Heart right ventricle (tissue), 16 donors: ENCODE measurements at regions of chrX and their contacts with region 1.

Region 1: DNA sequence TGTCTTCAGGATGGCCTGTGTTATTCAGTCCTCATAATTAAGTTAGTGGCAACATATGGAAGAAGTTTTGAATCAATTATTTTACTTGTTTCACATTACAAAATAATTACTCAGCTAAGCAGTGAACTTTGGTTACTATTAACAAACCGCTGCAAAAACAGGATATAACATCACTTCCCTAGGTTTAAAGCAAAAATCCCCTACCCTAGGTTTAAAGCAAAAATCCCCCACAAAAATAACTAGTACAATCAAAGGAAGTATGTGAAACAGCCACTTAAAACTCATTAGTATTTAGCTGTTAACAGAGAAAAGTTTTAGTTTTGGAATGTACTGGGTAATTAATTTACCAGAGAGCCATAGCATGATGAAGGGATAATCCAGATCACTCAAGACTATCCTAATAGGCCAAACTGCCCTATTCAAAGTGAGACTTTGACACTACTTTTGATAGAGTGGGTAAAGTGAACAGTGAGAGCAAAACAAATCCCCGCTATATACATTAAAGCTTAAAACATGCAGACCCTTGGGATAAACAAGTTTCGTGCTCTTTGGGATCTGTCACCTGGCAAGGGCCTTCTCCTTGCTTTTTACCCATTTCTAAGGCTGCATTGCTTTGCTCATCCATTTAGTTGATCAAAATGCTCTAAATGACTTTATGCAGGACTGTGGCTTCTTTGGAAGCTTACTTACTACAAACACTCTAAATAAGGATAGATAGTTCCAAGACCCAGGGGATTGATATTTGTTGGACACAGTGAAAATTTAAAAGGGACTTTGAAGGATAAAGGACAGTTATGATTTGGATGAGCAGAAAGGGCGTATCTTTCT is 36.4 kb upstream of the GPR174 start:
- DNase-seq: no peak
- ATAC-seq: peak in 3 of 8 donors; percentile 34 to 67 (median 39)
- H3K4me3 ChIP-seq: no peak overlapping the region
- H3K27ac ChIP-seq: peak overlapping the region in 6 of 10 donors; percentile 13 to 84 (median 53)
- H3K4me1 ChIP-seq: peaks cover 0 to 15% (median 0%) of the 10 kb centered on the region in 9 donors
- H3K27me3 ChIP-seq: no peaks in the 10 kb centered on the region
- CTCF ChIP-seq: no peak

Region 2: GRCh38 chrX:78997870-78998558 is 110.1 kb before region 1 on chrX:
- intact Hi-C with region 1: no loop called
- DNase-seq: no peak
- ATAC-seq: no peak
- H3K4me3 ChIP-seq: no peak overlapping the region
- H3K27ac ChIP-seq: no peak overlapping the region
- H3K4me1 ChIP-seq: no peaks in the 10 kb centered on the region
- H3K27me3 ChIP-seq: no peaks in the 10 kb centered on the region
- CTCF ChIP-seq: no peak

Region 3: DNA sequence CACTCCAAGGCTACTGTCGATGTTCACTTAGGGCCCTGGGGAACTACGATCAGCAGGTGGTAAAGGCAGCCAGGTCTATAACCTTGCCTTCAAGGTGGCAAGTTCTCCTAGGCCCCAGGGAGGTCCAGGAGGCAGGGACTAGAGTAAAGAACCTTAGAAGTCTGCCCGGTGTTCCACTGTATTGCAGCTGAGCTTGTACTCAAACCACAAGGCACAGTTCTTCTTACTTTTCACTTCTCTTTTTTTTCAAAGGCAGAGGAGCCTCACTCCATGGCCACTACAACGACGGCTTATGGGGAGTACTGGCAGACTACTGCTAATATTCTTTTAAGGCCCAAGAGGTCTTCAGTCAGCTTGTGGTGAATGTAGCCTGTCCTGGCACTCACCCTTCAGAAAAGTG is 42.4 kb before region 1 on chrX:
- intact Hi-C with region 1: no loop called
- DNase-seq: no peak
- ATAC-seq: no peak
- H3K4me3 ChIP-seq: no peak overlapping the region
- H3K27ac ChIP-seq: no peak overlapping the region
- H3K4me1 ChIP-seq: peaks cover 0 to 5% (median 0%) of the 10 kb centered on the region in 9 donors
- H3K27me3 ChIP-seq: peaks cover 0 to 6% (median 0%) of the 10 kb centered on the region in 7 donors
- CTCF ChIP-seq: no peak

Region 4: DNA sequence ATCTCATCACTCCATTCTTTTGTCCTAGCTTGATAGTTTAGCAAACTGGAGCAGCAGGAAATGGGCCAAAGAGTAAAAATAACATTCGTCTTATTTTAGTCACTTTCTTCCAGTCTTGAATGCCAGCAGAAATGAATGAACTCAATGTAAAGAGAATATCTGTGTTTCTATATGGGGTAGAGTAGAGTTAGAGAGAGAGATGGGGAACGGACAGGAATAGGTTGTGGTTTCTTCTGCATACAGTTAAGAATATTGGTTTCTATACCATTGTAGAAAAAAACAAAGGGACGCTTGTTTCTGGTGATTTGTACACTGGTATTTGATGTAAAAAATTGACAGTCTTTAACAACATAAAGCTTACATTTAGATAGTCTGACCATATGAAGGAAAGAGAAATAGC is 45.2 kb after region 1 on chrX:
- intact Hi-C with region 1: loop called in 1 of 10 experiments (anchors 10 kb)
- DNase-seq: no peak
- ATAC-seq: no peak
- H3K4me3 ChIP-seq: no peak overlapping the region
- H3K27ac ChIP-seq: peak overlapping the region in 1 of 10 donors; percentile 37
- H3K4me1 ChIP-seq: no peaks in the 10 kb centered on the region
- H3K27me3 ChIP-seq: peaks cover 0 to 6% (median 0%) of the 10 kb centered on the region in 7 donors
- CTCF ChIP-seq: no peak

Region 5: DNA sequence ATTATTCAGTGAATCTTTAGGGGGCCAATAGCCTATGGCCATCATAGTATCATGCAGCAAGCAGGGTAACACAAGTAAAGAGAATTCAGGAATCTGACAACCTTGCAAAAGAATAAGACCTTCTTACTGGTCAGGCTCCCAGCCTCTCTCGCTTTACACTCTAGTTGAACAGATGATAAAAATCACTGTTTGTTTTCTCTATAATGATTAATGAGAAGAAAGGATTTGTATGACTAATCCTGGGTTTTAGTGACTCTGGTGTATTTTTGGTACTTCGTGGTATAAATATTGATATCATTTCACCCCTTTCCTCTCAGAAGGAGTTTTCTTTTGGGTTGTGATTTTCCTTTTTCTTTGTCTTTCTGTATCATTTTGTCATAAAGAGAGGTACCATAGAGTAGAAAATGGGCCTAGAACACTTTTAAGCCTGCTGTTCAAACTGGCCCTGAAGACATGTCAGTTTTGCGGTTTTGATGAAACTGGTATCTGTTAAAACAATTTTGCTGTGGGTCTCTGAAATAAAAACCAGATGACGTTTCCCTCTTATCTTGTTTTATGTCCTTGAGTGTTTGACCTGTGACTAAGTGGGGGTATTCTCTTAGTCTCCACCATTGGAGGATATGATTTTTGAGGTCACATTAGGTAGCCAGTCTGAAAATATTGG is 611.6 kb after region 1 on chrX:
- intact Hi-C with region 1: no loop called
- DNase-seq: no peak
- ATAC-seq: no peak
- H3K4me3 ChIP-seq: no peak overlapping the region
- H3K27ac ChIP-seq: no peak overlapping the region
- H3K4me1 ChIP-seq: no peaks in the 10 kb centered on the region
- H3K27me3 ChIP-seq: no peaks in the 10 kb centered on the region
- CTCF ChIP-seq: no peak